ENCODE measurements at regions of chr7 and their contacts with region 1.

Region 1: GRCh38 chr7:87797798-87798403 is 78.3 kb downstream of the SLC25A40 start:
- DNase-seq: peak; percentile 47
- H3K4me3 ChIP-seq: no peak overlapping the region; a peak in 1 of 4 replicates
- H3K27ac ChIP-seq: no peak overlapping the region
- H3K4me1 ChIP-seq: no peaks in the 10 kb centered on the region
- H3K27me3 ChIP-seq: no peaks in the 10 kb centered on the region
- CTCF ChIP-seq: peak; percentile 80
- EP300 ChIP-seq: no peak
- RAD21 ChIP-seq: peak; percentile 96

Region 2: GRCh38 chr7:87648316-87648715 is 149.6 kb before region 1 on chr7:
- CTCF ChIA-PET with region 1: no interaction called
- POLR2A ChIA-PET with region 1: no interaction called
- DNase-seq: no peak
- H3K4me3 ChIP-seq: no peak overlapping the region
- H3K27ac ChIP-seq: no peak overlapping the region
- H3K4me1 ChIP-seq: no peaks in the 10 kb centered on the region
- H3K27me3 ChIP-seq: no peaks in the 10 kb centered on the region
- CTCF ChIP-seq: no peak
- EP300 ChIP-seq: no peak
- RAD21 ChIP-seq: no peak

Region 3: GRCh38 chr7:87767797-87768196 is 30.1 kb before region 1 on chr7:
- CTCF ChIA-PET with region 1: interaction called, 10 read pairs
- POLR2A ChIA-PET with region 1: no interaction called
- DNase-seq: no peak
- H3K4me3 ChIP-seq: no peak overlapping the region
- H3K27ac ChIP-seq: no peak overlapping the region
- H3K4me1 ChIP-seq: no peaks in the 10 kb centered on the region
- H3K27me3 ChIP-seq: no peaks in the 10 kb centered on the region
- CTCF ChIP-seq: no peak
- EP300 ChIP-seq: no peak
- RAD21 ChIP-seq: no peak

Region 4: DNA sequence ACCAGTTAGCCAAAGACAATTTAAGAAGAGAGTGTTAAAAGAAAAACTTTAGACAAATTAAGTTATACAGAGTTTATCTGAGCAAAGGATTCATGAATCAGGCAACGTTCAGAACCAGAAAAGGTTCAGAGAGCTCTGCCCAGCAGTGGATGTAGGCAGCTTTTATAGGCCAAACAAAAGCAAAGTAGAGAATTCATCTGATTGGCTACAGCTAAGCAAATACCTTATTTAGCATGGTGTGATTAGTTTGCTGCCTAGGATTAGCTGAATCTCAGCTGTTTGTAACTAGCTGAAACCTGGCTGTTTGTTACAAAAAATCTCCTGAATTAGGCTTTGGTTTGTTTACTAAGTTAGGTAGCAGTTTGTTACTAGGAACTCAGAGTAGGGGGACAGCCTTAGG is 12.2 kb after region 1 on chr7:
- CTCF ChIA-PET with region 1: interaction called, 14 read pairs
- POLR2A ChIA-PET with region 1: no interaction called
- DNase-seq: no peak
- H3K4me3 ChIP-seq: no peak overlapping the region
- H3K27ac ChIP-seq: no peak overlapping the region
- H3K4me1 ChIP-seq: no peaks in the 10 kb centered on the region
- H3K27me3 ChIP-seq: no peaks in the 10 kb centered on the region
- CTCF ChIP-seq: no peak
- EP300 ChIP-seq: no peak
- RAD21 ChIP-seq: no peak

Region 5: GRCh38 chr7:87886875-87887274 is 89.0 kb after region 1 on chr7:
- CTCF ChIA-PET with region 1: interaction called, 48 read pairs
- POLR2A ChIA-PET with region 1: no interaction called
- DNase-seq: peak; percentile 17
- H3K4me3 ChIP-seq: no peak overlapping the region; a peak in 1 of 4 replicates
- H3K27ac ChIP-seq: no peak overlapping the region; a peak in 1 of 4 replicates
- H3K4me1 ChIP-seq: peaks cover 0 to 5% of the 10 kb centered on the region in 2 experiments; a peak in 2 of 4 replicates
- H3K27me3 ChIP-seq: no peaks in the 10 kb centered on the region
- CTCF ChIP-seq: peak; percentile 80
- EP300 ChIP-seq: no peak
- RAD21 ChIP-seq: peak; percentile 75

Region 6: DNA sequence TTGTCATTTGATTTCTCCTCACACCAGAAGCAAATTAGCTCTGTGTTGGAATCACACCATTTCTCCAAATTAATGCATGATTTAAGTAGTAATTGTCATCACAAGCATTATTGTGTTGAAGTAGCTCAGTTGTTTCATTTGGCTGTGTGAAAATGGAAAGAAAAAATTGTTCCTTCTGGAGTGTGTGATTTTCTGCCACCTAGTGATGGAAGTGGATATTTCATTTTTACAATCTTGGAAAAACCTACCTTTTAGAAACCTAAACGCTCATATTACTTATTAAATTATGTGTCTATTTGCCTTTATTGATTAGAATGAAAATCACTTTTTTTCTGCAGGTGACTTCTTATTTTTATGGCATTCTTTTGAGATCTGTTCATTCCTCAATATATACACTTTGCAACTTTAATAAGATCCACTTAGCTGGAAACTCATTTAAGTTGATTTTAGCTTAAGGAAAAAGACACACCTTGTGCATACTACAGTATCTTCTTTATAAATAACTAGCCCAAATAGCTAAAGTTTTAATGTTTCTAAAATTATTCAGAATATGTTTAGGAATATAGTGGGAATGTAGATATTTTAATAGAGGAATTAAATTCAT is 371.9 kb after region 1 on chr7:
- CTCF ChIA-PET with region 1: interaction called, 24 read pairs
- POLR2A ChIA-PET with region 1: no interaction called
- DNase-seq: peak; percentile 15
- H3K4me3 ChIP-seq: no peak overlapping the region
- H3K27ac ChIP-seq: no peak overlapping the region
- H3K4me1 ChIP-seq: peaks cover 0 to 8% of the 10 kb centered on the region in 2 experiments; a peak in 2 of 4 replicates
- H3K27me3 ChIP-seq: no peaks in the 10 kb centered on the region
- CTCF ChIP-seq: peak; percentile 82
- EP300 ChIP-seq: no peak
- RAD21 ChIP-seq: peak; percentile 77

Measured in SK-N-SH (cell line).